ENCODE measurements at regions of chr5 and their contacts with region 1.

Region 1: GRCh38 chr5:153147891-153148623 is 342.4 kb upstream of the GRIA1 start:
- DNase-seq: peak; percentile 6
- CTCF ChIP-seq: peak; percentile 43

Region 2: DNA sequence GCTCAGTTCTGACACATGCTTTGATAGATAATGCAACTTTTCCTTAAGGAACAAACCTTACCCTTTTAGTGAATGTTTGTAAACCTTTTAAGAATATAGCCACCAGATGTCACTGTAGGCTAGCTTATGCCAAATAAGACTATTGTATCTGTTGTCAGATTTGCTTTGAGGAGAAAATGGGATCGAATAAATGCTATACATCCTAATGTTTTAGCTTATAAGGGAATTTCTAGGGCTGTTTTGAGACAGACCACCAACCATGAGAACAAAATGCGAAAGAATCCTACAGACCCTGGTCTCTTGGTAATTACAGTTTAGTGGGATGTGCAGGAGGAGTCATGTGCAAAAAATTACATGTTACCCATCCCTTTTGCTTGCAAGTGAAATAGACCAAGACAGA is 615.3 kb before region 1 on chr5:
- CTCF ChIA-PET with region 1: interaction called, 25 read pairs
- POLR2A ChIA-PET with region 1: no interaction called
- DNase-seq: peak; percentile 18
- CTCF ChIP-seq: peak; percentile 40

Region 3: DNA sequence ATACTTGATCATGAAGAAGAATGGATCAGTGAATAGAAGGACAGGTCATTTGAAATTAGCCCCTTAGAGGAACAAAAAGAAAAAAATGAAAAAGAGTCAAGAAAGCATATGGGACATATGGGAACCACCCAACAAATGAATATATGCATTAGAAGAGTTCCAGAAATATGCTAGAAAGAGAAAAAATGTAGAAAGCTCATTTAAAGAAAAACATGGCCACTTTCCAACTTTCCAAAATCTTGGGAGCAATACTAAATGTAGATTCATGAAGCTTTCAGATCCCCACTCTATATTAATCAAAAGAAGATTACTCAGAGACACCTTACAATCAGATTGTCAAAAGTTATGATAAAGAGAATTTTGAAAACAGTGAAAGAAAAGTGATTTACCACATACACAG is 408.1 kb before region 1 on chr5:
- CTCF ChIA-PET with region 1: no interaction called
- POLR2A ChIA-PET with region 1: no interaction called
- DNase-seq: no peak
- CTCF ChIP-seq: no peak

Region 4: GRCh38 chr5:153135411-153135810 is 12.6 kb before region 1 on chr5:
- CTCF ChIA-PET with region 1: interaction called, 24 read pairs
- POLR2A ChIA-PET with region 1: no interaction called
- DNase-seq: no peak
- CTCF ChIP-seq: no peak

Region 5: GRCh38 chr5:153159611-153160010 is 11.6 kb after region 1 on chr5:
- CTCF ChIA-PET with region 1: interaction called, 13 read pairs
- POLR2A ChIA-PET with region 1: no interaction called
- DNase-seq: no peak
- CTCF ChIP-seq: no peak

Region 6: GRCh38 chr5:153211076-153211475 is 63.0 kb after region 1 on chr5:
- CTCF ChIA-PET with region 1: no interaction called
- POLR2A ChIA-PET with region 1: no interaction called
- DNase-seq: no peak
- CTCF ChIP-seq: no peak